GM13976 (cell line): ENCODE measurements at regions of chr17 and their contacts with region 1.

Region 1: GRCh38 chr17:57995076-57995956 is 7.3 kb upstream of the VEZF1 start:
- DNase-seq: peak; percentile 60
- CTCF ChIP-seq: peak; percentile 45

Region 2: GRCh38 chr17:57855391-57856035 is 139.8 kb before region 1 on chr17:
- in situ Hi-C with region 1: loop called (anchors 5 kb)
- DNase-seq: no peak
- CTCF ChIP-seq: no peak

Region 3: GRCh38 chr17:58112970-58113631 is 117.8 kb after region 1 on chr17:
- in situ Hi-C with region 1: loop called (anchors 10 kb)
- DNase-seq: peak; percentile 72
- CTCF ChIP-seq: peak; percentile 89